Naive thymus-derived CD4-positive, alpha-beta T cell (primary cell): ENCODE measurements at regions of chr22 and their contacts with region 1.

Region 1: GRCh38 chr22:39940757-39941305 is 19.4 kb upstream of the TMA7B start:
- DNase-seq: peak in 7 of 9 donors; percentile 56 to 81 (median 75)
- ATAC-seq: peak; percentile 76
- H3K4me3 ChIP-seq: peak overlapping the region; percentile 32
- H3K4me3 Mint-ChIP-seq: peak overlapping the region; percentile 39 to 84 (median 70)
- H3K27ac ChIP-seq: peak overlapping the region; percentile 79
- H3K27ac Mint-ChIP-seq: peak overlapping the region in 5 of 9 donors; percentile 80 to 99 (median 98)
- H3K4me1 ChIP-seq: peaks cover 85 to 96% of the 10 kb centered on the region in 2 donors
- H3K4me1 Mint-ChIP-seq: peaks cover 70 to 97% (median 93%) of the 10 kb centered on the region in 7 donors
- H3K27me3 ChIP-seq: no peaks in the 10 kb centered on the region
- H3K27me3 Mint-ChIP-seq: no peaks in the 10 kb centered on the region

Region 2: DNA sequence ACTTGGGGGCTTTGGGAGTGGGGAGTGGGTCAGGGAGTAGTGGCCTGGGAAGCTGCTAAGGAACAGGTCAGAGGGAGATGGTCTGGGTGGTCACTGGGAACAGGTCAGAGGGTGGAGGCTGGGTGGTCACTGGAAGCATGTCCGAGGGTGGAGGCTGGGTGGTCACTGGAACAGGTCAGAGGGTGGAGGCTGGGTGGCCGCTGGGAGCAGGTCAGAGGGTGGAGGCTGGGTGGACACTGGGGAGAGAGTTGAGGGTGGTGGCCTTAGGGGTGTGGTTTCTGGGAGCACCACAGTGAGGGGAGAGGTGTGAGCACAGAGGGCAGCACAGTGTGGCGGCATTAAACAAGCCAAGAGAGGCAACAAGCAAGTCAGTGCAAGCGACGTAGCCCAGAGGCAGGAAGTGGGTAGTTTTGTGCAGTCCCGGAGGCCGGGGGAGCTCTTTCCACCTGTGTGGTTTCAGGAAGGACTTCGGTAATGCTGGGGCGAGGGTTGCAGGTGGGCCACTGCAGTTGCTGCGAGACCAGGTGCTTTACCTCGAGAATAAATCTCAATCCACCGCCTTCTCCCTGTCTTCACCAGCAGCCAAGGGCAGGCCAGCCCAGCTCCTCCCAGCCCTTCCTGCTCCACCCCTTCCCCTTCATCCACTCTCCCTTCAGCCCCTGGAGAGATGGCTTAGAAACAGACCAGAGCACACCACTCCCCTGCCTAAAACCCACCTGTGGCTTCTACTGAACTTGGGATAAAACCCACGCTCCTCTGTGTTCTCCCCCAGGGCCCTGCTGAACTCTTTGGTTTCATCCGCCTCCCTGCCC is 373.5 kb before region 1 on chr22:
- CTCF ChIA-PET with region 1: interaction called, 4 read pairs
- POLR2A ChIA-PET with region 1: interaction called, 3 read pairs
- intact Hi-C with region 1: loop called in 1 of 2 experiments (anchors 1 kb)
- DNase-seq: peak in 8 of 9 donors; percentile 35 to 67 (median 61)
- ATAC-seq: peak; percentile 87
- H3K4me3 ChIP-seq: peak overlapping the region; percentile 41
- H3K4me3 Mint-ChIP-seq: peak overlapping the region; percentile 32 to 76 (median 62)
- H3K27ac ChIP-seq: no peak overlapping the region
- H3K27ac Mint-ChIP-seq: peak overlapping the region; percentile 67 to 95 (median 77)
- H3K4me1 ChIP-seq: peaks cover 10 to 17% of the 10 kb centered on the region in 2 donors
- H3K4me1 Mint-ChIP-seq: peaks cover 12 to 26% (median 23%) of the 10 kb centered on the region in 7 donors
- H3K27me3 ChIP-seq: no peaks in the 10 kb centered on the region
- H3K27me3 Mint-ChIP-seq: peaks cover 0 to 4% (median 0%) of the 10 kb centered on the region in 5 donors

Region 3: DNA sequence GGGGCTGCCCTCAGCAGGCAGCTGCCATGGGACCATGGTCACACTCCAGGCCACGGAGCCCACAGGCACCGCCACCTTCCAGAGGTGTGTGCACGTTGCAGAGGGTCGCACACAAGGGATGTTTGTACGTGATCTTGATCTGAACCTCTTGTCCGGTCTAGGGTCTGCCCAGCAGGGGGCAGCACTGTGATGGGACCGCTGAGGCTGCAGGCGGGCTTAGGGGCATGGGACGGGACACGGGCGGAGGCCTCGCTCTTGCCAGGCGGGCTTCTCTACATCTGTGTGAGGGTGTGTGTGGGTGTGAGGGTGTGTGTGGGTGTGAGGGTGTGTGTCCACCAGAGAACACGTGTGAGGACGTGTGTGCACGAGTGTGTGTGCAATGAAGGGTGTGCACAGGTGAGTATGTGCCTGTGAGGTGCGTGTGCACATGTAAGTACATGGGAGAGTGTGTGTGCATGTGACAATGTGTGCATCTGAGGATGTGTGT is 317.9 kb before region 1 on chr22:
- CTCF ChIA-PET with region 1: interaction called, 5 read pairs
- POLR2A ChIA-PET with region 1: interaction called, 4 read pairs
- intact Hi-C with region 1: loop called (anchors 1 kb)
- DNase-seq: peak; percentile 60 to 73 (median 68)
- ATAC-seq: peak; percentile 84
- H3K4me3 ChIP-seq: no peak overlapping the region
- H3K4me3 Mint-ChIP-seq: no peak overlapping the region
- H3K27ac ChIP-seq: no peak overlapping the region
- H3K27ac Mint-ChIP-seq: no peak overlapping the region
- H3K4me1 ChIP-seq: peaks cover 0 to 5% of the 10 kb centered on the region in 2 donors
- H3K4me1 Mint-ChIP-seq: peaks cover 6 to 18% (median 11%) of the 10 kb centered on the region in 7 donors
- H3K27me3 ChIP-seq: no peaks in the 10 kb centered on the region
- H3K27me3 Mint-ChIP-seq: peaks cover 0 to 11% (median 2%) of the 10 kb centered on the region in 5 donors

Region 4: GRCh38 chr22:39859903-39860588 is 80.8 kb before region 1 on chr22:
- CTCF ChIA-PET with region 1: no interaction called
- POLR2A ChIA-PET with region 1: interaction called, 3 read pairs
- intact Hi-C with region 1: loop called in 1 of 2 experiments (anchors 1 kb)
- DNase-seq: peak in 4 of 9 donors; percentile 5 to 17 (median 10)
- ATAC-seq: no peak
- H3K4me3 ChIP-seq: no peak overlapping the region
- H3K4me3 Mint-ChIP-seq: peak overlapping the region in 8 of 10 donors; percentile 48 to 76 (median 64)
- H3K27ac ChIP-seq: no peak overlapping the region
- H3K27ac Mint-ChIP-seq: peak overlapping the region in 8 of 9 donors; percentile 4 to 81 (median 70)
- H3K4me1 ChIP-seq: peaks cover 0 to 14% of the 10 kb centered on the region in 2 donors
- H3K4me1 Mint-ChIP-seq: peaks cover 15 to 33% (median 29%) of the 10 kb centered on the region in 7 donors
- H3K27me3 ChIP-seq: no peaks in the 10 kb centered on the region
- H3K27me3 Mint-ChIP-seq: peaks cover 0 to 9% (median 0%) of the 10 kb centered on the region in 5 donors

Region 5: GRCh38 chr22:39927544-39927943 is 13.3 kb before region 1 on chr22:
- CTCF ChIA-PET with region 1: interaction called, 7 read pairs
- POLR2A ChIA-PET with region 1: interaction called, 40 read pairs
- intact Hi-C with region 1: loop called in 1 of 2 experiments (anchors 1 kb)
- DNase-seq: no peak
- ATAC-seq: no peak
- H3K4me3 ChIP-seq: peak overlapping the region; percentile 68
- H3K4me3 Mint-ChIP-seq: no peak overlapping the region
- H3K27ac ChIP-seq: peak overlapping the region; percentile 78
- H3K27ac Mint-ChIP-seq: no peak overlapping the region
- H3K4me1 ChIP-seq: peaks cover 90 to 94% of the 10 kb centered on the region in 2 donors
- H3K4me1 Mint-ChIP-seq: peaks cover 34 to 48% (median 41%) of the 10 kb centered on the region in 7 donors
- H3K27me3 ChIP-seq: no peaks in the 10 kb centered on the region
- H3K27me3 Mint-ChIP-seq: no peaks in the 10 kb centered on the region